ENCODE measurements at regions of chr1 and their contacts with region 1.

Region 1: DNA sequence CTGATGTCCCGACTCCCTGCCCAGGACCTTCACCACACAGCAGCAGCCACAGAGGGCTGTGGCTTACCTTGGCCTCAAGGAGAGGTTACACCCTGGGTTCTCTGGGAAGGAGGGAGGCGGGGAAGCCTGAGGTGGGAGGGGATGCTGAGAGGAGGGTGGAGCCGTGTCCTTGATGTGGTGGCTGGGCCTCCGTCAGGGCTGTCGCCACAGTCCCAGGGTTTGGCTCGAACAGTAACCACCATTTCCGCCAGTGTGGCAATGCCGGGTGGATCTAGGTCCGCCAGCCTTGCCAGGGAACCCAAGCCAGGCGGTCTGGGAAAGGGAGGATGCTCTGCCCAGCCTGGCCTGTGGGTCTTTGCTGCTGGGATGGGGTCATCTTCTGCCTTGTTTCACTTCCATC is 18.4 kb upstream of the CDCA8 start:
- DNase-seq: peak; percentile 92
- H3K4me3 Mint-ChIP-seq: peak overlapping the region; percentile 21
- H3K27ac Mint-ChIP-seq: no peak overlapping the region
- H3K4me1 Mint-ChIP-seq: peaks cover 26% of the 10 kb centered on the region
- H3K27me3 Mint-ChIP-seq: no peaks in the 10 kb centered on the region

Region 2: GRCh38 chr1:37602750-37603694 is 70.9 kb before region 1 on chr1:
- CTCF ChIA-PET with region 1: interaction called, 12 read pairs
- DNase-seq: peak; percentile 48
- H3K4me3 Mint-ChIP-seq: no peak overlapping the region
- H3K27ac Mint-ChIP-seq: no peak overlapping the region
- H3K4me1 Mint-ChIP-seq: no peaks in the 10 kb centered on the region
- H3K27me3 Mint-ChIP-seq: peaks cover 33% of the 10 kb centered on the region

Measured in activated naive CD4-positive, alpha-beta T cell treated with anti-CD3 and anti-CD28 coated beads, Interleukin-2, amount 10 ng/mL, durations not matched to agents 7 days and 5 days (primary cell).